PC-9 (cell line): ENCODE measurements at regions of chr12 and their contacts with region 1.

Region 1: DNA sequence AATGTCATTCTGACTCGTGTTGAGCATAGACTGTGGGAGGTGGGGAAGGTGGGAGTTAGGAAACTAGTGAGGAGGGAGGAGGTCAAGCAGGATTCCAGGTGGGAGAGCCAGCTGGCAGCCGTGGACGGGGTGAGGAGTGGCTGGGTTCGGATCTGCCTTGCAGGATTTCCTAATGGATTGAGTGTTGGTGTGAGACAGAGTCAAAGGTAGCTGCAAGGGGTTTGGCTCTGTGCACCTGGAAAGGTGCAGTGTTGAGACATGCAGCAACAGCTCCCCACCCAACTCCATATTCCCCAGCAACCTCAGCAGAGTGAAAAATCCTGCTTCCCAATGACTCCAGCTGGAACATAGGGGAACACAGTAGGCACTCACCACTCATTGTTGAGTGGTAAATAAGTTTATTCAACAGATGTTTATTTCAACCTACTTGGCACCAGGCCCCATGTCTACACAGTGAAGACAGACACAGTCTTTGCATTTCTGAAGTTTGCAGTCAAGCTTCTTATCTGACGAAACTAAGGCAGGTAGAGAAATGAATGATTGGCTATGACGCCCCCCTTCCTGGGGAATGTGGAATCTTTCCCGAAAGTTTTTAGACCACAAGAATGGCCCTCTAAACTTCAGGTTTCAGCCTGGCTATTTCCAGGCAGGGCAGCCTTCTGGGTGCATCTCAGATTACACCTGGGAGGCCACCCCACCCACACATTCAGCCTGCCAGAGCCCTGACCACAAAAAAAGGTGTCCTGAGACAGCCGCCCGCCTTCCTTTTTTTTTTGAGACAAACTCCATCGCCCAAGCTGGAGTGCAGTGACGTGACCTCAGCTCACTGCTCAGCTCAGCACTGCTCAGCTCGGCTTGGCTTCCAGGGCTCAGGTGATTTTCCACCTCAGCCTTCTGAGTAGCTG is 37.9 kb upstream of the PLEKHG6 start:
- DNase-seq: peak; percentile 99
- H3K4me3 ChIP-seq: peak overlapping the region; percentile 23; the same call in 1 of the 2 replicates
- H3K27ac ChIP-seq: peak overlapping the region; percentile 98
- H3K4me1 ChIP-seq: peaks cover 64% of the 10 kb centered on the region
- H3K27me3 ChIP-seq: no peaks in the 10 kb centered on the region
- CTCF ChIP-seq: no peak

Region 2: DNA sequence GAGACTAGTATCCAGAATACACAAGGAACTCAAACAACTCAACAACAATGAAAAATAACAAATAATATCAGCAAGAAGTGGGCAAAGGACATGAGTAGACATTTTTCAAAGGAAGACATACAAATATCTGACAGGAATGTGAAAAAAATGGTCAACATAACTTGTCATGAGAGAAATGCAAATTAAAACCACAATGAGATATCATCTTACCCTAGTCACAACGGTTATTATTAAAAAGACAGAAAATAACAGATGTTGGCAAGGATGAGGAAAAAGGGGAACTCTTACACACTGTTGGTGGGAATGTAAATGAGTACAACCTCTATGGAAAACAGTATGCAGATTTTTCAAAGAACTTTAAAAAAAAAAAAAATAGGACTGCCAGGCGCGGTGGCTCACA is 168.5 kb before region 1 on chr12:
- CTCF ChIA-PET with region 1: no interaction called
- POLR2A ChIA-PET with region 1: interaction called, 10 read pairs
- intact Hi-C with region 1: no loop called
- DNase-seq: no peak
- H3K4me3 ChIP-seq: no peak overlapping the region
- H3K27ac ChIP-seq: no peak overlapping the region
- H3K4me1 ChIP-seq: no peaks in the 10 kb centered on the region
- H3K27me3 ChIP-seq: no peaks in the 10 kb centered on the region
- CTCF ChIP-seq: no peak

Region 3: DNA sequence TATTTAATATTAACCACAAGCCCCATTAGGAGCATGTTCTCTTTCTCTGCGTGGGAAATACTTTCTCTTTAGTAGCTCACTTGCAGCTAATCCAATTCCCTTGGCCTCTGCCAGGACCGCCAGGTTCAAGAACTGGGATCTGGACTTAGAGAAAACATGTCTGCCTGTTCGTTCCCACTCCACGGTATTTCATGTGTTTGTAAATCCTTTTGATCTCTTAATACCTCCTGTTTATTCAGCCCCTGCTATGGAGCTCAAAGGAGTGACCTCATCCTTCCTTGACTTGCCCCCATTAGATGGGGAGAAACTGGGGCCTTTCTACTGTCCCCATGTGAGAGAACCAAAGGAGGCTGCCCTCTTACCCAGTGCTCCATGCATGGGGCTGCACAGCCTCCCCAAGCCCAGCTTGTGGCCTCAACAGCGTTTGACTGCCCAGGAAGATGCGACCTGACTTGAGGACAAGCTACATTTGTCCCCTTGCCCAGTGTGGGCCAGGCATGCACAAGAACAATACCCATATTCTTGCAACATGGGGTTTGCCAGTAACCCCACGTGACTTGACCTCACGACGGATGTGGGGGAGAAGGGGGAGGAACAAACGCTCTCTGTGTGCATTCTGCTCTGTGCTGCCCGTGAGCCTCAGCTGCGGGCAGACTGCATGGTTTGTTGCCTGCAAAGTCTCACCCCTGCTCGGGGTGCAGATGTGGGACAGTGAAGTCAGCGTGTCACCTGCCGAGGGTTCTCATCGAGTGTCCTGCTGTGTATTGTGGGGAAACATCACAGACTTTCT is 42.0 kb before region 1 on chr12:
- CTCF ChIA-PET with region 1: interaction called, 3 read pairs
- POLR2A ChIA-PET with region 1: interaction called, 27 read pairs
- intact Hi-C with region 1: loop called (anchors 1 kb)
- DNase-seq: no peak
- H3K4me3 ChIP-seq: no peak overlapping the region
- H3K27ac ChIP-seq: peak overlapping the region; percentile 86
- H3K4me1 ChIP-seq: peaks cover 81% of the 10 kb centered on the region
- H3K27me3 ChIP-seq: no peaks in the 10 kb centered on the region
- CTCF ChIP-seq: no peak

Region 4: DNA sequence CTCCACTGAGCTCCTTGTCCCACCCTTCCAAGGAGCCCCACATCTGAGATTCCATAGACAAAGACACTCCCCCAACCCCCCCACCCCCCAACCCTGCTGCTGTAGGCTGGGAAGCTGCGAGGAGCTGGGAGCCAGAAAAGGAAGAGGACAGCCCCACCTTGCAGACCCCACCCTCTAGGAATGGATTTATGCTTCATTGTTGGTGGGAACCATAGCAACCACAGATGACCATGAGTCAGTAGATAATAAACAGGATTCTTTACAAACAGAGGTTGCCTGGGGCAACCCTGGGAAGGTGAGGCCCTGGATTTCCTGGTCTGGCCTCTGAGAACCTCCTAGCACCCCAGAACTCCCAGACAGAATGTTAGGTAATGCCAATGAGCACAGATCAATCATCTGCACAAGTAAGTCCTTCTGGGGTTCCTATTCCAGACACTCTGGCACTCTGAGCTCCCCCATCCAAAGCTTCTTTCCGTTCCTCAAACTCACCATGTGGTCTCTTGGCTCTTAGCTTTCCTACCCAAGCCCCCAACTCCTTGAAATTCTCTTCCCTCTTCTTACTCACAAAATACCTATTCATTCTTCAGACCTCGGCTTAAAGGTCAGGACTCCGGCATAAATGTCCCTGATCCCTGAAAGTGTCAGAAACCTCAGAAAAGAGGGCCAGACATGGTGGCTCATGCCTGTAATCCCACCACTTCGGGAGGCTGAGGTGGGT is 22.7 kb after region 1 on chr12:
- CTCF ChIA-PET with region 1: no interaction called
- POLR2A ChIA-PET with region 1: interaction called, 15 read pairs
- intact Hi-C with region 1: loop called (anchors 1 kb)
- DNase-seq: peak; percentile 95 to 99
- H3K4me3 ChIP-seq: no peak overlapping the region; the same call in 1 of the 2 replicates
- H3K27ac ChIP-seq: peak overlapping the region; percentile 91
- H3K4me1 ChIP-seq: peaks cover 64% of the 10 kb centered on the region
- H3K27me3 ChIP-seq: no peaks in the 10 kb centered on the region
- CTCF ChIP-seq: no peak

Region 5: DNA sequence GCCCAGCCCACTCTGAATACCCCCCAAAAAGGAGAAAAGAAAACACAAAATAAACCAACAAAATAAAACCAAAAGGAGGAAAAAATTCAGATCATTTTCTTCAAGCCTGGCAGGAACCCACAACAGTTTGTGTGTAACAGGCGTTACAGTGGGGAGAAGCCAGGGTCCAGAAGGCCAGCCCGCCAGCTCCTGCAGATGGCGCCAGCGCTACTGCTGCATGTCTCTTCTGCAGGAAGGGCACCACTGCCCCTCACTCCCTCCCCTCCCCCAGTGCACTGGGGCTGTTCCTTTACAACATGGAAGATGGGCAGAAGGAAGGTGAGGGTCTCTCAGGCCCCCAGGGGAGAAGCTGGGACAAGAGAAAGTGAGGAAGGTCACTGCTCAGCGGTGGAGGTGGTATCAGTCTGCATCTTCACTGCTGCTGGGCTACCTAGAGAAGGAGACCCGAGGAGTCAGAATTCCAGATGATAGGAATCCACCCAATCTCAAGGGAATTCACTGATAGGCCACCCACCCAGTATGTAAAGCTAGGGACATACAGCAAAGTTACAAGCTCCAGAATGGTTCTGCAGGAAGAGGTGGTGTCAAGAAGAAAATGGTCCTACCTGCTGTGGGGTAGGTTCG is 297.8 kb after region 1 on chr12:
- CTCF ChIA-PET with region 1: no interaction called
- POLR2A ChIA-PET with region 1: no interaction called
- intact Hi-C with region 1: no loop called
- DNase-seq: peak; percentile 35 to 62
- H3K4me3 ChIP-seq: no peak overlapping the region
- H3K27ac ChIP-seq: no peak overlapping the region
- H3K4me1 ChIP-seq: peaks cover 16% of the 10 kb centered on the region
- H3K27me3 ChIP-seq: no peaks in the 10 kb centered on the region
- CTCF ChIP-seq: peak; percentile 58; the same call in 1 of the 2 replicates